Aorta (tissue), 5 donors: ENCODE measurements at regions of chr14 and their contacts with region 1.

Region 1: DNA sequence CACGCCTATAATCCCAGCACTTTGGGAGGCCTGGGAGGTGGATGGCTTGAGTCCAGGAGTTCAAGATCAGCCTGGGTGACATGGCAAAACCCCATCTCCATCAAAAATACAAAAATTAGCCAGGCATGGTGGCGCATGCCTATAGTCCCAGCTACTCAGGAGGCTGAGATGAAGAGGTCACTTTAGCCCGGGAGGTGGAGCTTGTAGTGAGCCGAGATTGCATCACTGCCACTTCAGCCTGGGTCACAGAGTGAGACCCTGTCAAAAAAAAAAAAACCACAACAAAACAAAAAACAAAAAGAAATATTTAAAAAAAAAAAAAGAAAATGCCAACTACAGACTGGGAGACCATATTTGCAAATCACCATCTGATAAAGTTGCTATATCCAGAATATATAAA is 17.5 kb downstream of the WDR89 start:
- DNase-seq: no peak
- ATAC-seq: no peak
- H3K4me3 ChIP-seq: no peak overlapping the region
- H3K27ac ChIP-seq: no peak overlapping the region
- H3K4me1 ChIP-seq: no peaks in the 10 kb centered on the region
- H3K27me3 ChIP-seq: no peaks in the 10 kb centered on the region

Region 2: DNA sequence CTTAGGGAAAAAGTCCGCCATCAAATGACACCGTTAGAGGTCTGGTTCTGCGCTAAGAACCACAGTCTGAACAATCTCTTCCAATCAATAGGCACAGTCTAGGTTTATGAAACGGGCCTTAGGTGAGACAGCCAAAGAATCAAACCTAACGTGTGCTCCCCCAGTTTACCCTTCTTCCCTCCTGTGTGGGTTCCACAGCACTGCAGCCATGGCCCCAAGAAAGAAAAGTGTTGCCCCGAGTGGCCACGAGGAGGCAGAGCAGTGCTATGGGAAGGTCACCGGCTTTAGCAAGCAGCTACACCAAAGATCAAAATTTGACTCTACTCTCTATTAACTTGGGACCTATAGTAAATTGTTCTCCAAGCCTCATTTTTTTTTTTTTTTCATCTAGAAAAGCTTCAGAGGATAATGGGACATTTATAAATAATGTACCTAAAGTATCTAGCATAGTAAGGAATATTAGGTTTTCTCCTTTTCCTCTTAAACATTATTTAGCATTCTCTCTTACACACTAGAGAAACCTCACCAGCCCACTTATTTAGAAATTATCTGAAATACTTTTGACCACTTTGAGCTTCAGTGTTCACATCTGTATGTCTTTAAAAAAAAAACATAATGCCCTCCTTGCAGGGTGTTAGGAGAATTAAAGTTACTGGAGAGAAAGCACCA is 235.3 kb before region 1 on chr14:
- intact Hi-C with region 1: loop called in 1 of 2 experiments (anchors 10 kb)
- DNase-seq: peak; percentile 65 to 88
- ATAC-seq: peak; percentile 82
- H3K4me3 ChIP-seq: no peak overlapping the region
- H3K27ac ChIP-seq: no peak overlapping the region
- H3K4me1 ChIP-seq: no peaks in the 10 kb centered on the region
- H3K27me3 ChIP-seq: no peaks in the 10 kb centered on the region